Endothelial cell of umbilical vein (primary cell): ENCODE measurements at regions of chrX and their contacts with region 1.

Region 1: DNA sequence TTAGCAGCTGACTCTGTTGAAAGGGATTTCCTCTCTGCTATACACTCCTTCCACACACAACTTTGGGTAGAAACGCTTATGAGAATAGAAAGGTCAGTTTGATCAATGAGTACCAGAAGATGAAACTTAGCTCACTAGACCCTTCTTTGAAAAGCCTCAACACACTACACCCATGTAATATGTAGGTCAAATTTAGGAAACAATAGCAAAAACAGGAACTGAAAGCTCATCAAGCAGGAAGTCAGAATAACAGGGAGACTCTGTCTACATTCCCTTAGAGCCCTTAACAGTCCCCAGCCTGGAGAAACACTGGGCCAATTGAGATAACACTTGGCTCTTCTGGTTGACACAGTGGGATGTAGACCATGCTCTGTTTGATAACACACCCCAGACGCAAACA is 30.7 kb downstream of the SRPX2 start:
- DNase-seq: no peak
- H3K4me3 ChIP-seq: no peak overlapping the region
- H3K27ac ChIP-seq: peak overlapping the region; percentile 29
- H3K4me1 ChIP-seq: peaks cover 39% of the 10 kb centered on the region
- H3K27me3 ChIP-seq: no peaks in the 10 kb centered on the region
- CTCF ChIP-seq: no peak
- POLR2A ChIP-seq: no peak

Region 2: GRCh38 chrX:100512471-100512870 is 162.2 kb before region 1 on chrX:
- CTCF ChIA-PET with region 1: interaction called, 11 read pairs
- POLR2A ChIA-PET with region 1: no interaction called
- dilution Hi-C with region 1: no loop called
- intact Hi-C with region 1: loop called (anchors 5 kb)
- DNase-seq: peak; percentile 9
- H3K4me3 ChIP-seq: no peak overlapping the region
- H3K27ac ChIP-seq: no peak overlapping the region
- H3K4me1 ChIP-seq: no peaks in the 10 kb centered on the region
- H3K27me3 ChIP-seq: no peaks in the 10 kb centered on the region
- CTCF ChIP-seq: peak; percentile 8 to 16
- POLR2A ChIP-seq: no peak

Region 3: DNA sequence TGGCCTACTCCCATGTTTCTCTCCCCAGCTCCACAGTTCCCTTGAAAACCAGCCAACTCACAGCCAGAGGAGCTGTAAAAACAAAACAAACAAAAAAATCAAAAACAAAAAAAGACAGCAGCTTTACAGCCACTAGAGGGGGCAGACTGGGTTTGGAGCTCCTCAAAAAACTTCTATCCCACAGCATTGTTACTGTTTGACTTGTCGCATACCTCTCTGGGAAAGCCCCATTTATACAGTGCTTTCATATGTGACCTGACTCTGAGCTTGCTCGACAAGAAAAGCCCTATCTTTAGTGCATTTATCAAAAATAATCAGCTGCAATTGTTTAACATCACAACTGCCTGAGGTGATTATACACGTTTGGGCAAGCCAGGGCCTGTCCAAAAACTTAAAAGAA is 59.7 kb before region 1 on chrX:
- CTCF ChIA-PET with region 1: interaction called, 17 read pairs
- POLR2A ChIA-PET with region 1: no interaction called
- dilution Hi-C with region 1: no loop called
- intact Hi-C with region 1: no loop called
- DNase-seq: peak; percentile 74
- H3K4me3 ChIP-seq: no peak overlapping the region
- H3K27ac ChIP-seq: no peak overlapping the region
- H3K4me1 ChIP-seq: peaks cover 2% of the 10 kb centered on the region
- H3K27me3 ChIP-seq: no peaks in the 10 kb centered on the region
- CTCF ChIP-seq: peak; percentile 46 to 60
- POLR2A ChIP-seq: no peak

Region 4: DNA sequence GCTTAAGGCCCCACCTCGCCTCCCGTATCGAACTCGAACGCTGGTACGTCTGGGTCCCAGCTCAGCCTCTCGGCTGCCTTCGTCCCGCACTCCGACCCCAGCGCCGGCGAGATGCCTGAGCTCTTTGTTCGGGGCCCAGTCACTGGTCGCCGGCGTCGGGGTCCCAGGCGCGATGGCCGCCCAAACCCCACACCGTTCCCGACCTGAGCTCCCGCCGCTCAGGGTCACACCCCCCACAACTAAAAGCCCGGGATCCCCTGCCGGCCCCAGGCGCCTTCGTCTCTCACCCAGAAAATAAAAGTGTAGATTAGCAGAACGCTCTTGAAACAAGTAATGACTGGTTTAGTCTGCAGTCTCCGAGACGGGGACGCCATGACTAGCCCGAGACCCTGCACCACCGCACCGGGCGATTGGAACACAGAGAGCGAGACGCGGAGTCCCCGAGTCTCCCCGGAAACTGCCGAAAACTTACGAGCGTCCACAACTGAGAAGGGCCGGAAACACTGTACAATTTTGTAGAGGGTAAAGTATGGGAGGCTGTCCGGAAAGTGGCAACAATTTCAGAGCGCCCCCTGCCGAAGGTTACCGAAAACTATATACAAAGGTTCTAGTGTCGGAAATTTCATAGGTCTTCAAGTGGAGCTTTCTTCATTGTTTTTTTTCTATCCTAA is 38.2 kb before region 1 on chrX and contains the start of gene TSPAN6:
- CTCF ChIA-PET with region 1: interaction called, 27 read pairs
- POLR2A ChIA-PET with region 1: no interaction called
- dilution Hi-C with region 1: no loop called
- intact Hi-C with region 1: no loop called
- DNase-seq: peak; percentile 84
- H3K4me3 ChIP-seq: peak within 1 kb of the TSS; percentile 69 to 86 (median 81)
- H3K27ac ChIP-seq: peak within 1 kb of the TSS; percentile 78
- H3K4me1 ChIP-seq: peaks cover 4% of the 10 kb centered on the region
- H3K27me3 ChIP-seq: no peaks in the 10 kb centered on the region
- CTCF ChIP-seq: peak; percentile 41 to 55
- POLR2A ChIP-seq: peak; percentile 25
- total RNA-seq, gene TSPAN6: 43.1 and 44.6 TPM in 2 replicates

Region 5: DNA sequence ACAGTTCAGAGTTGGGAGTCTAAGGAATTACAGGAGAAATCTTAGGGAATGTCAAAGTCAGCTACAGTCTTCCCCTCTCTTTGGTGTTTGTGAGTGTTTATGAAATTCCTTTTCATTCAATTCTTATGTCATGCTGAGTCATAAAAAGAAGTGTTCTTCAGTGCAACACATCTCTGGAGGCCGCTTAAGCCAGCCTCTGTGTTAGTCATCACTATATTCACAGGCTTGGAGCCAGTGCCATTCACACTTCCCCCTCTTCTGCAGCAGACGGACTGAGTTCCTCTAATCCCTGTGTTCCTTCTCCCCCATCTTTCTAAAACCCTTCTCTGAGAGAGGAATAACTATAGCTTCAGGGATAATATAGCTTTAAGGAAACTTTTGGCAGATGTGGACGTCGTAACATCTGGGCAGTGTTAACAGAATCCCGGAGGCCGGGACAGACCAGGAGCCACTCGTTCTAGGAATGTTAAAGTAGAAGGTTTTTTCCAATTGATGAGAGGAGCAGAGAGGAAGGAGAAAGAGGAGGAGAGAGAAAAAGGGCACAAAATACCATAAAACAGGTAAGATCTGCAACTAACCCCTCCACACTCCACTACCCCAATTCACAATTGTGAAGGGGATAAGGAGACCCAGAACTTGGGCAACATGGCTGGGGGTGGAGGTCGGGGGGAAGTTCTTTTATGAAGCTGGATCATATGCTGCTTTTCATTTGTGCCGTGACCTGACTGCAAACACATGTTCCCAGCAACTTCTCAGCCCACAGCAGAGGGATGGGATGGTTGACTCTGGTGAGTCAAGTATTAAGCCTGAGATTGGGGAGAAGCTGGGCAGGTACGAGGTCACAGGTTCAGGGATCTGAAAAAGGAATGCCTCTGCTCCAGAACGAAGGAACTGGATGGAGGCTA is 30.5 kb before region 1 on chrX and contains the start of gene SRPX2:
- CTCF ChIA-PET with region 1: interaction called, 10 read pairs
- POLR2A ChIA-PET with region 1: no interaction called
- dilution Hi-C with region 1: no loop called
- intact Hi-C with region 1: no loop called
- DNase-seq: peak; percentile 85
- H3K4me3 ChIP-seq: peak within 1 kb of the TSS; percentile 52 to 95 (median 88)
- H3K27ac ChIP-seq: peak within 1 kb of the TSS; percentile 99
- H3K4me1 ChIP-seq: peaks cover 53% of the 10 kb centered on the region
- H3K27me3 ChIP-seq: no peaks in the 10 kb centered on the region
- CTCF ChIP-seq: no peak
- POLR2A ChIP-seq: peak; percentile 83
- total RNA-seq, gene SRPX2: 124 and 133 TPM in 2 replicates

Region 6: GRCh38 chrX:100649550-100650356 is 25.0 kb before region 1 on chrX:
- CTCF ChIA-PET with region 1: interaction called, 10 read pairs
- POLR2A ChIA-PET with region 1: no interaction called
- dilution Hi-C with region 1: no loop called
- intact Hi-C with region 1: loop called (anchors 1 kb)
- DNase-seq: peak; percentile 93
- H3K4me3 ChIP-seq: peak overlapping the region in 1 of 3 experiments; percentile 22
- H3K27ac ChIP-seq: peak overlapping the region; percentile 99
- H3K4me1 ChIP-seq: peaks cover 75% of the 10 kb centered on the region
- H3K27me3 ChIP-seq: no peaks in the 10 kb centered on the region
- CTCF ChIP-seq: no peak
- POLR2A ChIP-seq: peak; percentile 57

Region 7: GRCh38 chrX:100685284-100685996 is 10.7 kb after region 1 on chrX:
- CTCF ChIA-PET with region 1: interaction called, 46 read pairs
- POLR2A ChIA-PET with region 1: no interaction called
- dilution Hi-C with region 1: no loop called
- intact Hi-C with region 1: loop called (anchors 1 kb)
- DNase-seq: peak; percentile 84
- H3K4me3 ChIP-seq: no peak overlapping the region
- H3K27ac ChIP-seq: peak overlapping the region; percentile 47
- H3K4me1 ChIP-seq: peaks cover 17% of the 10 kb centered on the region
- H3K27me3 ChIP-seq: no peaks in the 10 kb centered on the region
- CTCF ChIP-seq: peak; percentile 59 to 69
- POLR2A ChIP-seq: no peak

Region 8: GRCh38 chrX:100700809-100701208 is 26.1 kb after region 1 on chrX:
- CTCF ChIA-PET with region 1: no interaction called
- POLR2A ChIA-PET with region 1: no interaction called
- dilution Hi-C with region 1: no loop called
- intact Hi-C with region 1: no loop called
- DNase-seq: no peak
- H3K4me3 ChIP-seq: no peak overlapping the region
- H3K27ac ChIP-seq: no peak overlapping the region
- H3K4me1 ChIP-seq: no peaks in the 10 kb centered on the region
- H3K27me3 ChIP-seq: no peaks in the 10 kb centered on the region
- CTCF ChIP-seq: no peak
- POLR2A ChIP-seq: no peak